Activated CD4-positive, alpha-beta T cell treated with anti-CD3 and anti-CD28 coated beads, Interleukin-2, amount 10 ng/mL, durations not matched to agents 7 days and 5 days (primary cell): ENCODE measurements at regions of chr3 and their contacts with region 1.

Region 1: DNA sequence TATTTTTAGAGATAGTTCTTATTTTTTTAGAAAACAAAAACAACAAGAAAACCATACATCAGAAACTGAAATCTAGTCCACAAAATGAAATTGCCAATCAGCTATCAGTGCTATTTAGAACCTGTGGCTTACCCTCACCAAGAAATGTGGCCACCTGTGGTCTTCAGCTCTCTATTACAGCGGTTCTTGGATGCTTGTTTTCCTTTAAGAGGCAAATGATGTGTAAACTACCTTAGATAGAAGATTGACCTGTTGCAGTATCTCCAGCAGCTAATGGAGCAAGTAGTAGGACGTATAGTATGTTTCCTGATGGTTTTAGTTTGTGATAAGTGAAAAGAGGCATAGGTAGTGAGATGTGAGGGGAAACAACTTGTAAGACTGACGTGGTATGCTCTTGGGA is 21.2 kb downstream of the TFG start:
- DNase-seq: no peak
- H3K4me3 Mint-ChIP-seq: no peak overlapping the region
- H3K27ac Mint-ChIP-seq: no peak overlapping the region
- H3K4me1 Mint-ChIP-seq: peaks cover 21% of the 10 kb centered on the region
- H3K27me3 Mint-ChIP-seq: no peaks in the 10 kb centered on the region

Region 2: DNA sequence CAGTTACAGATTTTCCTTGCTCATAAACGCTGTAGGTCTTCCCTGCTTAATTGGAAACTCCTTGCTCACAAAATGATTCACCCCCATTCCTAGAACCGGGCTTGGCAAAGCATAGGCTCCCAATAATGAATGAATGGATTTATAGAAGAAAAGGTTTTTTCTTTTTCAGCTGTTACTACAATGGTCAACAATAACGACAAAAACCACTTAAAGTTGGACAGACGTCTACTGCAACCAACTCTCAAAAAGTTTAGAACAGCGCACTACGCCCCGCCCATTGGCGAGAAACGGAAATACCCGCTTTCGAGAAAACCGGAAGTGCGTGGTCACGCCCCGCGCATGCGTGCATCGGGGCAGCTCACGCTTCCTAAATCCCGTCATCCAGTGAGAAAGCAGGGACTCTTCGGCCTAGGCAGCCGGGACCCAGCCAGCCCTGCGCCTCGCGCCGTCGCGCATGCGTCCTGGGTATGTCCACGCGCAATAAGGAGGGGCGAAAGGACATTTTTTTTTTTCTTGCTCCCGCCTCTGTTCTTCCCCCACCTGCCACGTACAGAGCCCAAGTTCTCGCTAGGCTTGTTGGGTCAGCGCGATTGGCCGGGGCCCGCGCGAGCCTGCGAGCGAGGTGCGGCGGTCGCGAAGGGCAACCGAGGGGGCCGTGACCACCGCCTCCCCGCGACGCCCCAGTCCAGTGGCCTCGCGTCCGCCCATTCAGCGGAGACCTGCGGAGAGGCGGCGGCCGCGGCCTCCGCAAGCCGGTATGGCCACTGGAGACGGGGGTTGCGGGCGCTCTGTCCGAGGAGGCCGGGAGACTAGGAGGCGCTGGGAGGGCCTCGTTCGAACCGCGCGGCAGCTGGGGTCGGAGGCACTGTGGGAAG is 21.3 kb before region 1 on chr3 and contains the start of gene TFG:
- CTCF ChIA-PET with region 1: interaction called, 10 read pairs
- POLR2A ChIA-PET with region 1: no interaction called
- DNase-seq: peak; percentile 97
- H3K4me3 Mint-ChIP-seq: peak within 1 kb of the TSS; percentile 88
- H3K27ac Mint-ChIP-seq: peak within 1 kb of the TSS; percentile 94
- H3K4me1 Mint-ChIP-seq: peaks cover 44% of the 10 kb centered on the region
- H3K27me3 Mint-ChIP-seq: no peaks in the 10 kb centered on the region
- total RNA-seq, gene TFG: 49.1 to 58.5 TPM